Colonic mucosa (tissue), 4 donors: ENCODE measurements at regions of chr2 and their contacts with region 1.

Region 1: DNA sequence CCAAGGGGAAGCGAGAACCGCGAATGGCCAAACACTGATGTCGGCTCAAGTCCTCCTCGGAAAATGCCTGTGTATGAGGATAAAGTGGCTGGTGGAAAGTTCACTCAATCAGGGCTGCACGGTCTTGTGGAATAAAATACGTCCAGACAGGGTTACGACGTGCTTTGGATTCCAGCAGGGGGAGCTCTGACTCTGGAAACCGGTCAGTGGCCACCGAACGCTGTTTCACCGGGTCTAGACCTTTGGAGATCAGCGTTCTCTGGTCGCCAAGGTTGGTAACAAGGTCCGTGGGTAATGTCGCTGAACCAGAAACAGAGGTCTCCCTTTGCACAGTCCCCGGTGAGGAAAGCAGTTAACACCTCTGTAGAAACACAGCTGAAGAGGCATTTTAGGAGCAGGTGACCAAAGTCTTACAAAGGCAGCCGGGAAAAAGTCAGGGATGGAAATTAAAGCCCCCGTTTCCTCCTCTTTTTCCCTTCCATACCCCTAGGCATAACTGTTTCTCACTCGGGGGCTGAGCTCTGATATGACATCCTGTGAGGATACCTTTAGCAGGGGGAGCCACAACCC is 47.8 kb downstream of the CDCA7 start:
- DNase-seq: peak; percentile 86
- H3K4me3 ChIP-seq: no peak overlapping the region
- H3K27ac ChIP-seq: no peak overlapping the region
- H3K4me1 ChIP-seq: no peaks in the 10 kb centered on the region
- H3K27me3 ChIP-seq: peaks cover 3% of the 10 kb centered on the region
- CTCF ChIP-seq: peak; percentile 69

Region 2: DNA sequence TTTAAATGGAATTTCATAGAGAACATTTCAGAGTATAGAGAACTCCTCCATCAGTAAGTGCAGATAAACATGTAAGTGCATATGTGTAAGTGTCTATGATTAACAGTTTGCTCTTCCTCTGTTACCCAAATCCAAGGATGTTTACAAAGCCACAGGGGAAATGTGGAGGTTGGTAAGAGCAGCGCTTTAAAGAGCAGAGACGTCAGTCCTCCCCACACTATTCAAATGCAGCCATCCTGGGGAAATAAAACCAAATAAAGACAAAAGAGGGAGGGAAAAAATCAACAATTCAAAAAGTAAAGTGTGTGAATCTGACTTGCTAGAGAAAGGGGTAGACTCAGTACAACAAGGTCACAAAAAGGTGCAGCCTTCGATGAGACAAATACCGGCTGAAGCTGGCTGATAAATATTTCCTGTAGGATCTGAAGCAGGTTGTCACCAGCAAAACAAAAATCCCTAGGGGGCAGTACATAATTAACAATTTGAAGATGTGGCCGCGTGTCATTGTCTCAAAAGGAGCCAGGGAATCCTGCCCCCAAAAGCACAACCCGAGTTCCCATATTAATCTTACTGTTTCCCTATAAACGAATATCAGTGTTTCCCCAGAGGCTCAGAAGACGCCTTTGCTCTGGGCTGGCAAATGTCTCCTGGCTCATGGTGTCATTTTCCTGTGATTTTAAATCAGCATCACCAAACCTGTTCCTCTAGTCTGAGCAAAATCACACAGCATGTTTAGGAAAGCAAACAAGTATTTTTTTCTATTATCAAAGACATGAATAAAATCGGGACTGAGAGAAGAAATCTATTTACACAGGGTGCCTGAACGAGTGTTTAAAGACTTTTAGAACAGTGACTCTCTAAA is 168.8 kb after region 1 on chr2:
- intact Hi-C with region 1: loop called (anchors 5 kb)
- DNase-seq: peak; percentile 46
- H3K4me3 ChIP-seq: no peak overlapping the region
- H3K27ac ChIP-seq: peak overlapping the region; percentile 31
- H3K4me1 ChIP-seq: no peaks in the 10 kb centered on the region
- H3K27me3 ChIP-seq: no peaks in the 10 kb centered on the region
- CTCF ChIP-seq: peak; percentile 11

Region 3: DNA sequence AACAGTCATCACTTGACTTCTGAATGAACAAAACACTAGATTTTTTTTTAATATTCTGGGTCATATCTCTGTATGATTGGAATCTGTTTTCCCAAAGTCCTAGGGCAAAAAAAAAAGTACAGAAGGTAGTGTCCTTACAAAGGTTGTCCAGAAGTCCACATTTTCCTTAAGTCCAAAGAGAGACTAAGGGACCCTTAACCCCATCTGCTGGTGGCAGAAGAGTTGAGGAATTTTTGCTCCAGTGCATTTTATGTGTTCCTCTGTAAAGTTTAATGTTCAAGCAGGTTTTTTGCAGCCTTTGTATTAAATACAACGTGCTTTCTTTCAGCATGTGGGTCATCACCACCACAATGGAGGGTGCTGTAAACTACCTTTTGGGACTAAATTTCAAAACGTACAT is 346.8 kb after region 1 on chr2:
- intact Hi-C with region 1: loop called (anchors 5 kb)
- DNase-seq: no peak
- H3K4me3 ChIP-seq: no peak overlapping the region
- H3K27ac ChIP-seq: no peak overlapping the region
- H3K4me1 ChIP-seq: no peaks in the 10 kb centered on the region
- H3K27me3 ChIP-seq: no peaks in the 10 kb centered on the region
- CTCF ChIP-seq: no peak

Region 4: DNA sequence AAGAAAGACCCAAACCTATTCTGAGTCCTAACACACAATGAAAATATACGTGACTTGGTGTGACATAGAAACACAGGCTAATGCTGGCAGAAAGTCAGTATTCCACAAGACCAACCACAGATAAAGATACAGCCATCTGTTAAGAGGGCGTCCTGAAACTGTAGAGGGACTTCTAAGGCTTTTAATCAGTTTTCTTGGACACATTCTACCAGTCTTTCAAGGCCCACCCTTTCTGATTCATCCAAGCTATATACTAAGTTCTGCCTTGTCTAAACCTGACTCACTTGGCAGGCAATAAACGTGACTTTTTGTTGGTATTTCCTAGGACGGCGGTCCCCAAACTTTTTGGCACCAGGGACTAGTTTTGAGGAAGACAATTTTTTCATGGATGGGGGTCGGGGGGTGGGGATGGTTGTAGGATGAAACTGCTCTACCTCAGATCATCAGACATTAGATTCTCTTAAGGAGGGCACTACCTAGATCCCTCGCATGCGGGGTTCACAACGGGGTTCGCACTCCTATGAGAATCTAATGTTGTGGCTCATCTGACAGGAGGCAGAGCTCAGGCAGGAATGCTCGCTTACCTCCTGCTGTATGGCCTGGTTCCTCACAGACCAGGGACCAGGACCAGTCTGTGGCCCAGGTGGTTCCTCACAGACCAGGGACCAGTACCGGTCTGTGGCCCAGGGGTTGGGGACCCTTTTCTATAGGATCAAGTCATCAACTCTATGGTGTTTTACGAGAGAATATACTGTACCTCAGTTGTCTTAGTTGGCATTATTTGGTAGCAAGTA is 501.3 kb after region 1 on chr2:
- intact Hi-C with region 1: no loop called
- DNase-seq: no peak
- H3K4me3 ChIP-seq: no peak overlapping the region
- H3K27ac ChIP-seq: no peak overlapping the region
- H3K4me1 ChIP-seq: no peaks in the 10 kb centered on the region
- H3K27me3 ChIP-seq: no peaks in the 10 kb centered on the region
- CTCF ChIP-seq: no peak

Region 5: DNA sequence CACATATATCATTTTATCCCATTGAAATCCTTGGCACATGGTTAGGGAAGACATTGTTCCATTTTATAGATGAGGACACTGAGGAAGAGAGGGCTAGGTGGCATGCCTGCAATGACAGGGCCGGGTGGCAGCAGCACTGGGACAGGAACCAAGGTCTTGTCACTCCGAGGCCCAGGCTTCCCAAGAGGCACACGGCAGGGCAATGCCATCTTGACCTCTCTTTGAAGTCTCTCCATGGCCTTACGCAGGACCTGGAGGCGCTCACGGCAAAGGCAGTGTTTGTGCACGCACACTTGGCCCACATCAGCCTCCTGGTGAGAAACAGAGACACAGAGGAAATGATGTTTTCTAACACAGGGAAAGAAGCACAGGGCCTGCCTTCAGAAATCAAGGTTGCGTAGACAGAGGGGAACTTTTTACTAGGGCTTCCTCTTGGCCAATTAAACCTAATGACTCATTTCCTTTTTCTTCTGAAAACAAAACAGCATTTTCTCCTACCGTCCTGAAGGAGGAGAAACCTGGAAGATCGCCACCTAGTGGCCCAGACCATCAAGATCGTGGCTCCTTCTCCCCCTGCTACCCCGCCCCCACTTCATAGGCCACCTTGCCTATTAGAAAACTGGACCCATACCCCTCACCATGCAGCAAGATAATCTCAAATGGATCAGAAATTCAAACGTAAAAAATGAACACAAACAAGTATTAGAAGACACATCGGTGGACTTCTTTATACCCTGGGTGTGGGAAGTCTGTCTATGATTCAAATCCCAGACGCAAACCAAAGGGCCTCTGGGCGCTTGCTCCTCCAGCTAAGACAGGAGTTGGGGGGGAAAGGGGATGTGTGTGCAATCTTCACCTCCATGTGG is 637.3 kb after region 1 on chr2:
- intact Hi-C with region 1: loop called (anchors 10 kb)
- DNase-seq: peak; percentile 91
- H3K4me3 ChIP-seq: no peak overlapping the region
- H3K27ac ChIP-seq: peak overlapping the region; percentile 83
- H3K4me1 ChIP-seq: no peaks in the 10 kb centered on the region
- H3K27me3 ChIP-seq: no peaks in the 10 kb centered on the region
- CTCF ChIP-seq: peak; percentile 90

Region 6: GRCh38 chr2:174341286-174341994 is 939.0 kb after region 1 on chr2:
- intact Hi-C with region 1: loop called (anchors 2 kb)
- DNase-seq: peak; percentile 89
- H3K4me3 ChIP-seq: no peak overlapping the region
- H3K27ac ChIP-seq: no peak overlapping the region
- H3K4me1 ChIP-seq: peaks cover 34% of the 10 kb centered on the region
- H3K27me3 ChIP-seq: peaks cover 84% of the 10 kb centered on the region
- CTCF ChIP-seq: peak; percentile 98